Endothelial cell of umbilical vein (primary cell): ENCODE measurements at regions of chr5 and their contacts with region 1.

Region 1: DNA sequence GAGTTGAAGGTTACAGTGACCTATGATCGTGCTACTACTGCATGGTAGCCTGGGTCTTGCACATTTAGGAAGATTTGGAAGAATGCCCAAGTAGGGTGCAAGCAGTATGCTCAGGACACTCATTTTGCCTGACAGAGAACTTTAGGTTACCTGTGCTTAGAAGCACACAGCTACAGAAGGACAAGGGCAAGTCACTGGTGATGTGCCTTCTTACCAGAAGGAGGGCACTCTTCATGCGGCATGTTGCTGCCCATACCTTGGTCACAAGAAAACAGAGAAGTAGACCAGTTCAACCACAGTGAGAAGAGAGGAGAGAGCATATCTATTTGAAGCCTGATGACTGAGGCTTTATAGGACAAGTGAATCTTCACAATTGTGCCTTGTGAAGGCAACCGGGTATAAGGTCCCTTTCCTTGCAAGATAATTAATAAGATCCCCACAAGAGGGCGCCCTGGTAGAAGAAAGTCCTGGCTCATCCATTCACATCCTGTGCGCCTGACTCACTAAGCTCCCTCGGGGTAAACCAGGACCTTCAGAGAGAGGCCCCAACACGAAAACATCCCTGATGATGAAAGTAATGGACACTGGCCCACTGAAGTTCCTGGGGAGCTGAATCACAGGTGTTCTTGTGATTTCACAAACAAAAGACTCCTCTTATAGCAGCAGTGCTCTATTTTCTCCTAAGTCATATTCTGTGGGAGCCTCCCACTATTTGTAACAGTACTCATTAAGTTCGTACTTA is 38.1 kb upstream of the STARD4 start:
- DNase-seq: peak; percentile 96
- H3K4me3 ChIP-seq: peak overlapping the region in 1 of 3 experiments; percentile 37
- H3K27ac ChIP-seq: peak overlapping the region; percentile 98
- H3K4me1 ChIP-seq: peaks cover 25% of the 10 kb centered on the region
- H3K27me3 ChIP-seq: no peaks in the 10 kb centered on the region
- CTCF ChIP-seq: peak; percentile 51 to 60
- POLR2A ChIP-seq: no peak

Region 2: GRCh38 chr5:111158105-111158744 is 392.2 kb before region 1 on chr5:
- CTCF ChIA-PET with region 1: interaction called, 9 read pairs
- POLR2A ChIA-PET with region 1: no interaction called
- dilution Hi-C with region 1: no loop called
- intact Hi-C with region 1: loop called (anchors 1 kb)
- DNase-seq: peak; percentile 84
- H3K4me3 ChIP-seq: no peak overlapping the region
- H3K27ac ChIP-seq: no peak overlapping the region
- H3K4me1 ChIP-seq: no peaks in the 10 kb centered on the region
- H3K27me3 ChIP-seq: no peaks in the 10 kb centered on the region
- CTCF ChIP-seq: peak; percentile 91 to 98
- POLR2A ChIP-seq: no peak

Region 3: DNA sequence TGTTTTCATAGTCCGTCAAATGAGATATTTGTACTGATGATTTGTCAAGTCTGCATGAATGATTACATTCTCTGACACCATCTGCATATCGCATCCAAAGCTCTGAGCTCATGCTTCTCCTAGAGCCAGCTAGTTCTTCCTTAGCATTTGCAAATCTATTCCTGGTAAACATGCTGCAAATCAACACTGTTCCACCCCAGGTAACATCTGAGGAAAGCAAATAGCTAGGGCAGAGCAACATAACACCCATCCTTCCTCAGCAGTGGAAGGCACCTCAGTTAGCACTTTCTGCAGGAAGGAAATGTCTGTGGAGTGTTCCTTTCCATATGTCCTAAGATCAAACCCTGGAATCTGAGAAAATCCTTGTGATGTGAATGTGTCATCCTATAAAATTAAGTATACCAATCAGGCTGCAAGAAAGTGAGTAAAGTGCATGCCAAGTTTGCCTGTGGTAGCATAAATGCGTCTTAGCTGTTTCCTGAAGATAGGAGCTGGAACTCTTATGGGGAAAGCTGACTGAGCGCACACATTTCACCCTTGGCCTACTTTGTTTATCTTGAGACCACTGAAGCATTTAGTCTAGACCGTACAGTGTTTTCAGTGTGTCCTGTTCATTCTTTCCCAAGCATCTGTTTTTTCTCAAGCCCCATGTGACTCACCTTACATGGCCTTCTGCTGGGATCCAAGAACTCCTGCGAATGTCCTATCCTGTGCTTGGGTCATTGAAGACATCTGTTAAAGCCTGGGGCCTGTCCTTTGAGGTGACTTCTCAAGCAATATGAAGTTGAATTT is 12.8 kb after region 1 on chr5:
- CTCF ChIA-PET with region 1: interaction called, 116 read pairs
- POLR2A ChIA-PET with region 1: interaction called, 33 read pairs
- dilution Hi-C with region 1: no loop called
- intact Hi-C with region 1: loop called (anchors 1 kb)
- DNase-seq: peak; percentile 100
- H3K4me3 ChIP-seq: peak overlapping the region in 1 of 3 experiments; percentile 0
- H3K27ac ChIP-seq: peak overlapping the region; percentile 99
- H3K4me1 ChIP-seq: peaks cover 50% of the 10 kb centered on the region
- H3K27me3 ChIP-seq: no peaks in the 10 kb centered on the region
- CTCF ChIP-seq: no peak
- POLR2A ChIP-seq: peak; percentile 89

Region 4: GRCh38 chr5:111689357-111689935 is 139.0 kb after region 1 on chr5:
- CTCF ChIA-PET with region 1: interaction called, 14 read pairs
- POLR2A ChIA-PET with region 1: no interaction called
- dilution Hi-C with region 1: no loop called
- intact Hi-C with region 1: no loop called
- DNase-seq: no peak
- H3K4me3 ChIP-seq: no peak overlapping the region
- H3K27ac ChIP-seq: no peak overlapping the region
- H3K4me1 ChIP-seq: no peaks in the 10 kb centered on the region
- H3K27me3 ChIP-seq: no peaks in the 10 kb centered on the region
- CTCF ChIP-seq: no peak
- POLR2A ChIP-seq: no peak

Region 5: DNA sequence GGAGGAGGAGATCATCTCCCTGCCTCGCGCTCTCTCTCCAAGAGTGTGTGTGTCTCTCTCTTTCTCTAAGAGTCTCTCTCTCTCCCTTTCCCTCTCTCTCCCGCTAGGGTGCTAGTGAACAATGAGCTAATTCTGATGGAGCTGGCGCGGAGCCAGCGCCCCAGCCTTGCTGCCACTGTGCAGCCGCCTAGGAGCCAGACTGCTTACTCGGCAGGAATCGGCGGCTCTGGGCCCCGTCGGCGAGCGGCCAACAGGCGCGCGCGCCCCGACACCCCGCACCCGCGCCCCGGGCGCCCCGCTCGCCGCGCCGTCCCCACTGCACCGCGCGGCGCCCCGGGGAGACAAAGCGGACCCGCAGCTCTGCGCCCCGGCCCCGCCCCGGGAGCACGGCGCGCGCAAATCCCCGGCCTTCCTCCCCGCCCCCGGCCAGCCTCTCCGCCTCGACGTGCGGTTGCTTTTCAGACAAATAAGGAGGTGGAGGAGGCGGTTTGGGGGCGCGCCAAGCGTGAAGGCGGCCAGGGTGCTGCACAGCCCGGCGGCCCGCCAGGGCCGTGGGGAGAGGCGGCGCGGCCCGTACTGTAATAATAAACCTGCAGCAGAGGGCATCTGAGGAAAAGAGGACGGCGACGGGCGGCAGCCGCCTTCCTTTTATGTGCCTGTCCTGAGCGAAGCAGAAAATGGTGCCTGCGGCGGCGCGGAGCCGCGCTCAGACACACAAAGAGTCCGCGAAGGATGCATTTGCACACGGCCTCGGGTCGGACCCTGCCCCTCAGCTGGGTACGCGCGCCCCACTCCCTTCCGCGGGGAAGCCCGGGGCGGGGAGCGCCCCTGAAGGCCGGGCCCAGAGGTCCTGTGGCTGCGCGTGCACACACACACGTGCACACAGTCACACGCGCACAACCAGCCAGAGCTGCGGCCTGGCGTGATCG is 207.2 kb after region 1 on chr5:
- CTCF ChIA-PET with region 1: interaction called, 59 read pairs
- POLR2A ChIA-PET with region 1: interaction called, 11 read pairs
- dilution Hi-C with region 1: no loop called
- intact Hi-C with region 1: loop called (anchors 1 kb)
- DNase-seq: peak; percentile 91
- H3K4me3 ChIP-seq: peak overlapping the region; percentile 53 to 100 (median 80)
- H3K27ac ChIP-seq: peak overlapping the region; percentile 97
- H3K4me1 ChIP-seq: peaks cover 29% of the 10 kb centered on the region
- H3K27me3 ChIP-seq: no peaks in the 10 kb centered on the region
- CTCF ChIP-seq: peak; percentile 24 to 54
- POLR2A ChIP-seq: no peak

Region 6: DNA sequence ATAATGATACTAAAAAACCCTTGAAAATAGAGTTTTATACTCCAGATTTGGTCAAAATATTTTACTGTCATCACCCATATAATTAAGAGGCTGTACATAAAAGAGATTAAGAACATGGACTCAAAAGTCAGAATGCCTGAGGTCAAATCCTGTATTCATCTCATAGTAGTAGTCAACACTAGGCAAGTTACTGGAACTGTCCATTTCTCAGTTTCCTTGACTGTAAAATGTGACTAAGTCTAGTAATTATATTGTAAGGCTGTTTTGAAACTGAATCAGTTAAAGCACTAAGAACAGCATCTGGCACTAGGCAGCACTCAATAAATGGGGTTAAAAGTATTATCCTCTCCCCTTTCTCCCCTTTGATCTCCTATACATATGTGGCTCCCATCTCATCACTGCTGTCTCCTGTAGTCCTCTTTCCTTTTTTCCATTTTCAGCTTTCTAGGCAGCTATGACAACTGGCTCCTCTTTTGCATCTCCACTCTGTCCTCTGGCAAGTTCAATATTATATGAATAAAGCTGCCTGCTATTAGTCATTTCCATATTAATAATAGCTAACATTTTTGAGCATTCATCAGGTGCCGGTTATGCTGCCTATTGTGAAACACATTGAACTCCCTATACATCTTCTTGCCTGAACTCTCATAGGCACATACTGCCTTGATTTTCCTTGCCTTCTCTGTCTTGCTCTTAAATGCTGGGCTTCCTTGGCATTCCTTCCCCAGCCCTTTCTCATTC is 392.4 kb after region 1 on chr5:
- CTCF ChIA-PET with region 1: no interaction called
- POLR2A ChIA-PET with region 1: no interaction called
- dilution Hi-C with region 1: no loop called
- intact Hi-C with region 1: loop called (anchors 2 kb)
- DNase-seq: no peak
- H3K4me3 ChIP-seq: no peak overlapping the region
- H3K27ac ChIP-seq: no peak overlapping the region
- H3K4me1 ChIP-seq: no peaks in the 10 kb centered on the region
- H3K27me3 ChIP-seq: peaks cover 0 to 1% of the 10 kb centered on the region in 2 experiments
- CTCF ChIP-seq: no peak
- POLR2A ChIP-seq: no peak